Activated CD4-positive, alpha-beta T cell treated with anti-CD3 and anti-CD28 coated beads for 36 hours (primary cell): ENCODE measurements at regions of chr1 and their contacts with region 1.

Region 1: DNA sequence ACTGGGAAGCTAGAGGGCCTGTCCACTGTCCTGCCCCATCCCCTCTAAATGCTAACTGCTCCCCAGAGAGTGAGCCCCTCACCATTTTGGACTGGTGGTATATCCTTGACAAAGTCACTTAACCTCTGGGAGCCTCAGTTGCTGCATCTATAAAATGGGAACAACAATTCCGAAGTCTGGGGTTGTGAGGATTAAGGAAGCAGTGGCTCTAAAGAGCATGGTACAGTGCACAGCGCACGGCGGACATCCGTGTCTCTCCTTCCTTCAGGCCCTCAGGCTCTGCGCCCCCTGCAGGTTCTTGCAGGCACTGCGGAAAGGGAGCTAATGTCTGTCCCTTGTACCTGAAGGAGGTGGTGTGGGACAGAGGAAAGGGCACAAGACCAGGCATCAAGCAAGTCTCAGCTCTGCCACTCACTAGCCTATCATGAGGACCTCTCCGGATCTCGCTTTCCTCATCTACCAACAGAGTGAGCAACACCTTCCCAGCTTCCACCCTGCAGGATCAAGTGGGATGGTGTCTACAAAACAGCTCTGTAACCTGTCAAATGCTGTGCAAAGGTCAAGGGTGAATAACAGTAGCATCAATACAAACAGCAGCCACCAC is 20.1 kb downstream of the ECE1 start:
- DNase-seq: peak; percentile 91
- ATAC-seq: peak; percentile 87
- H3K4me3 Mint-ChIP-seq: no peak overlapping the region
- H3K27ac Mint-ChIP-seq: peak overlapping the region; percentile 21
- H3K4me1 Mint-ChIP-seq: peaks cover 28% of the 10 kb centered on the region
- H3K27me3 Mint-ChIP-seq: no peaks in the 10 kb centered on the region

Region 2: GRCh38 chr1:21216835-21217811 is 53.1 kb before region 1 on chr1:
- CTCF ChIA-PET with region 1: interaction called, 22 read pairs
- POLR2A ChIA-PET with region 1: no interaction called
- intact Hi-C with region 1: no loop called
- DNase-seq: peak; percentile 86
- ATAC-seq: peak; percentile 71
- H3K4me3 Mint-ChIP-seq: no peak overlapping the region
- H3K27ac Mint-ChIP-seq: peak overlapping the region; percentile 37
- H3K4me1 Mint-ChIP-seq: no peaks in the 10 kb centered on the region
- H3K27me3 Mint-ChIP-seq: no peaks in the 10 kb centered on the region

Region 3: GRCh38 chr1:21246905-21247642 is 23.1 kb before region 1 on chr1:
- CTCF ChIA-PET with region 1: interaction called, 11 read pairs
- POLR2A ChIA-PET with region 1: no interaction called
- intact Hi-C with region 1: no loop called
- DNase-seq: no peak
- ATAC-seq: no peak
- H3K4me3 Mint-ChIP-seq: no peak overlapping the region
- H3K27ac Mint-ChIP-seq: no peak overlapping the region
- H3K4me1 Mint-ChIP-seq: peaks cover 4% of the 10 kb centered on the region
- H3K27me3 Mint-ChIP-seq: no peaks in the 10 kb centered on the region

Region 4: DNA sequence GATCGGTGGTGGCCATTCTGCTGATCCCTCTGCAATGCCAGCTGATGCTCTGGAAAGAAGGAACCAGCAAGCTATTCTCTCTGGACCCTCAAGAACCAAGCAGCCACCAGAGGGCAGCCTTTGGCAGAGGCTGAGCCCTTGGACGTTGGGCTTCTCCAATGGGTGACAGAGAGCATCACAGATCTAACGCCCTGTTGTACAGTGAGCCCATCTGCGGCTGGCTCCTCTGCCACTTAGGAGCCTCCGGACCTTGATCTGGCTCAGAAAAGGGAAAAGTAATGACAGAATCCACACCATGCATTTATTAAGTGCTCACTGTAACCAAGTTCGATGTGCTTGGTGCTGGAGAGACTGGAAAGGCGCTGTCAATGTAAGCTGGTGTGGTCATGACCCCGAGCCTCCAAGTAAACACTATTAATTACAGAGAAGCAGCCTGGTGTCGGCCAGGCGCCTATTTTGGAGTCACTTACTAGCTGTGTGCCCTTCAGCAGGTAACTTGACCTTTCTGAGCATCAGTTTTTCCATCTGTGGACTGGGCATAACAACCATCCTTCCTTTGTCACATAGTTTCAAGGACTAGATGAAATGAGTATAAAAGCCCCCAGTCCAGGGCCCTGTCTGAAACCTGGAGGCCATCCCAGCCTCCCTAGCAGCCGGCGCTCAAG is 14.8 kb before region 1 on chr1:
- CTCF ChIA-PET with region 1: interaction called, 77 read pairs
- POLR2A ChIA-PET with region 1: no interaction called
- intact Hi-C with region 1: no loop called
- DNase-seq: peak; percentile 90
- ATAC-seq: peak; percentile 64
- H3K4me3 Mint-ChIP-seq: no peak overlapping the region
- H3K27ac Mint-ChIP-seq: peak overlapping the region; percentile 84
- H3K4me1 Mint-ChIP-seq: peaks cover 48% of the 10 kb centered on the region
- H3K27me3 Mint-ChIP-seq: no peaks in the 10 kb centered on the region

Region 5: GRCh38 chr1:21287905-21288514 is 17.8 kb after region 1 on chr1:
- CTCF ChIA-PET with region 1: interaction called, 58 read pairs
- POLR2A ChIA-PET with region 1: interaction called, 10 read pairs
- intact Hi-C with region 1: no loop called
- DNase-seq: no peak
- ATAC-seq: no peak
- H3K4me3 Mint-ChIP-seq: no peak overlapping the region
- H3K27ac Mint-ChIP-seq: peak overlapping the region; percentile 40
- H3K4me1 Mint-ChIP-seq: peaks cover 56% of the 10 kb centered on the region
- H3K27me3 Mint-ChIP-seq: no peaks in the 10 kb centered on the region

Region 6: DNA sequence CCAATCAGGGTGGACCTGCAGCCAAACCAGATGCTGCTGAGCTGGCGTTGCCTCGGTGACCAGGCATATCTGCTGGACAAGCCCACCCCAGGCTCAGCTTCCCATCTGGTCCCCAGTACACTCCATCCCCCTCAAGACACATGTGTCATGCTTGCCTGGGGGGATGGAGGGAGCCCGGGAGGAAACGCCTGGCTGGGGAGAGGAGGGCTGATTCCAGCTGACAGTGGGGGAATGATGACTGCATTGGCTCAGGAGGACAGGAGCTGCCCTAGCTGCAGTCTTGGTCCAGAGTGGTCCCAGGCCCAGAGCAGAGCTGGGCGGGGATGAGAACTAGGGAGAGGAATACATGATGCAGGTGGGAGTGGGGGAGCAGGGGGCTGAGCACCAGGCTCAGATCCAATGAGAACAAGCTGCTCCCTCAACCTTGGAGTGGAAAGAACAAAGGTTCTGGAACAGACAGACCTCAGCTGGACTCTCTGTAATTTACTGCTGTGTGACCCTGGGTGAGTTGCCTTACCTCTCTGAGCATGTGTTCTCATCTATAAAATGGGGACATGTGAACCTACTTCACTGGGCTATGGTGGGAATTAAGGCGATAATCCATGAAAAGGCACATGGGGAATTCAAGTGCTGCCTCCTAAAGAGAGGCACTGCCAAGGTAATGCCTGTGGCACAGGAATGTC is 43.2 kb after region 1 on chr1:
- CTCF ChIA-PET with region 1: interaction called, 20 read pairs
- POLR2A ChIA-PET with region 1: no interaction called
- intact Hi-C with region 1: no loop called
- DNase-seq: no peak
- ATAC-seq: no peak
- H3K4me3 Mint-ChIP-seq: no peak overlapping the region
- H3K27ac Mint-ChIP-seq: no peak overlapping the region
- H3K4me1 Mint-ChIP-seq: peaks cover 53% of the 10 kb centered on the region
- H3K27me3 Mint-ChIP-seq: no peaks in the 10 kb centered on the region

Region 7: DNA sequence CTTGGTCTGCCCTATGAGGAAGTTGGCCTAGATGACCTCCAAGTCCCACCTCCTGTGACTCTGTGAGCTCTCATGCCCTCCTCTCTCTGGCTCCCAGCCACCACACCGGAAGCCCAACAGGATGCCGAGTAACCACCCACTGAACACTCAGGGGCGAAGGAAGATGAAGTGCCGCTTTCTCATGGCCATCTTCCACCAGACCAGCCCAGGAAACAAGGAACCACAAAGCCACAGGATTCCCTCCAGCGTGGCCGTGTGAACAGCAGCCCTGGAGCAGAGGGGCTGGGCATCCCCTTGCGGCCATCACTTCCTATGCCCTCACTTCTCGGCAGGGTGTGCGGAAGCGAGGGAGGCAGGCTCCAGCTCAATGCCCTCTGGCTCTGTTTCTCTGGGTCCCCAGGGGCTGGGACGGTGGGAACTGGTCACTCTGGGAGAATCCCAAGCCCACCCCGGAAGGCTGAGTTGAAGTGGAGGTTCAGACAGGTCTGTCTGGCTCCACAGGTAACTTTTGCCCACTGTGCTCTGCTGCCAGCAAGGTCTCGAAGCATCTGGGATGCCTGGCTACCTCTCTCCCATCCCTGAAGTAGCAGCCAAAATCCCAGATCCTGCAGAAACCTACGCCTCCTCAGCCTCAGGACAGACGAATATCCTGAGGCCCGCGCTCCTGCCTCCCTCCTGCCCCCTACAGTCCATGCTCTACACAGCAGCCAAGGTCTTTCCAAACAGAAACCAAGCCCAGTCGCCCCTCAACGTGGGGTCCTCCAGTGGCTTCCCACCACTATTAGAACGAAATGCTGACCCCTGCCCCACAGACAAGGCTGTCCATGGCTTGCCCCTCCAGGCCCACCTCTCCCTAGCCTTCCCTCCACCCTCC is 64.3 kb after region 1 on chr1:
- CTCF ChIA-PET with region 1: interaction called, 28 read pairs
- POLR2A ChIA-PET with region 1: interaction called, 3 read pairs
- intact Hi-C with region 1: no loop called
- DNase-seq: peak; percentile 87
- ATAC-seq: peak; percentile 84
- H3K4me3 Mint-ChIP-seq: peak overlapping the region; percentile 80
- H3K27ac Mint-ChIP-seq: peak overlapping the region; percentile 97
- H3K4me1 Mint-ChIP-seq: peaks cover 97% of the 10 kb centered on the region
- H3K27me3 Mint-ChIP-seq: no peaks in the 10 kb centered on the region